Posterior vena cava (tissue), 2 donors: ENCODE measurements at regions of chr11 and their contacts with region 1.

Region 1: DNA sequence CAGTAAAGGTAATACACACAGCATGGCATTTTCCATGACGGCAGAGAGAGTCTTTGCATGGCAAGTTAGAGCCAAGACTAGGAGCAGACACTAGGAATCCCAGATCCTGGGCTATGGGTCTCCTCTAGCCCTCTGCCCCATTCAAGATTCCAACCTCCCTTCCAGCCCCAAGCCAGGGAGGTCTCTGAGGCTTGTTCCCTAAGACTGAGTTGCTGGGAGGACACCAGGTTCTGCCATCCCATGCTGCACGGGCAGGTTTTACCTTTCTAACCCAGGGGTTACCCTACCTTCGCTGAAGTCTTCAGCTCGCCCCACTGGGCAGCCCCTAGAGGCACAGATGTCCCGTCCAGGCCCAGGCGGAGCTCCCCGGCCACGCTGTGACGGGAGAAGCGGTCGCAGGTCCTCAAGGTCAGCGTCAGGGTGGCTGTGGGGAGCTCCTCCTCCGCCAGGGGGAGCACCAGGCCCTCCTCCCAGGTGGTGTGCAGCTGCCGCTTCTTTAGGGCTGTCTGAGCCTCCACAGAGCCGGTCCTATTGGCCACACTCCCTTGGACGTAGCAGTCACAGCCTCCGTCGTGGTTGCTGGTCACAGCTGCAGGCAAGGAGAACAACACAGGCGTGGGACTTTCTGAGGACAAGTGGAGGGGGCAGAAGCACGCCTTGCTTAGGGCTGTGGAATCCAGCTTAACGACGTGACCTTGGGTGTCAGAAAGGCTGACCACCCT is 33.8 kb downstream of the SYT13 start:
- DNase-seq: no peak

Region 2: GRCh38 chr11:45280449-45280848 is 28.2 kb after region 1 on chr11:
- intact Hi-C with region 1: loop called in 1 of 2 experiments (anchors 1 kb)
- DNase-seq: no peak